ENCODE measurements at regions of chr20 and their contacts with region 1.

Region 1: DNA sequence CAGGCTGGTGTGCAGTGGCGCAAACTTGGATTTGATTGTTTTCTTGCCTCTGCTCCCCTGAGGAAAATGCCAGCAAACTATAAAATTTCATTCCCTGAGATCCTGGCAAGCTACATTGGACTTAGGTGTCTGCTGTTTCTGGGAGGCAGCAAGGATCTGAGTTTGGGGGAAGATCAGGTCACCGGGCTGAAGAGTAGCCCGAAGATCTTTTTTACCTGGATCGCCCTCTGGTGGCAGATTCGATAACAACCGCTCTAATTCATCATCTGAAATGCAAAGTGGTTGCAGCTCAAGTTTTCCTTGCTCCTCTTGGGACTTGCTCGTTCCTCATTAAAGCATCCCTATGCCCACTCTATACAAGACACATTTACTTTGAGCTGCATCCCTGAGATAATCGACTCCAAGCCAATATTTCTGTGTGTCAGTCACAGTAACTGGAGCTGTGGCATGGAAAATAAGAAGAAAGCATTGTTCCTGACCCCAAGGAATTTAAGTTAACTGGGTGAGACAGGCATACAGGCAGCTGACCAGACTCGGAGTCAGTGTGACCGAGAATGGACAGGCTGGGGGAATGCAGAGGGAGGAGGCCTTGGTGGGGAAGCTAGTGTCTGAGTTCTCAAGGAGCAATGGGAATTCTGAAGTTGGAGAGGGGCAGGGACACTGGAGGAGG is 131.8 kb upstream of the PROKR2 start:
- DNase-seq: peak; percentile 57
- ATAC-seq: peak; percentile 84
- H3K4me3 ChIP-seq: no peak overlapping the region
- H3K27ac ChIP-seq: no peak overlapping the region
- H3K4me1 ChIP-seq: no peaks in the 10 kb centered on the region
- H3K27me3 ChIP-seq: peaks cover 0 to 8% of the 10 kb centered on the region in 2 experiments; a peak in 1 of 5 replicates
- CTCF ChIP-seq: peak; percentile 86
- EP300 ChIP-seq: no peak
- POLR2A ChIP-seq: no peak
- RAD21 ChIP-seq: peak; percentile 66

Region 2: GRCh38 chr20:5205348-5206210 is 243.0 kb before region 1 on chr20:
- CTCF ChIA-PET with region 1: interaction called, 20 read pairs
- POLR2A ChIA-PET with region 1: no interaction called
- in situ Hi-C with region 1: loop called (anchors 5 kb)
- intact Hi-C with region 1: loop called (anchors 1 kb)
- DNase-seq: peak; percentile 80
- ATAC-seq: peak; percentile 84
- H3K4me3 ChIP-seq: no peak overlapping the region
- H3K27ac ChIP-seq: no peak overlapping the region
- H3K4me1 ChIP-seq: peaks cover 35% of the 10 kb centered on the region
- H3K27me3 ChIP-seq: no peaks in the 10 kb centered on the region
- CTCF ChIP-seq: peak; percentile 97
- EP300 ChIP-seq: no peak
- POLR2A ChIP-seq: no peak
- RAD21 ChIP-seq: peak; percentile 98

Region 3: GRCh38 chr20:5402903-5403531 is 45.6 kb before region 1 on chr20:
- CTCF ChIA-PET with region 1: interaction called, 10 read pairs
- POLR2A ChIA-PET with region 1: no interaction called
- in situ Hi-C with region 1: no loop called
- intact Hi-C with region 1: loop called (anchors 1 kb)
- DNase-seq: peak; percentile 62
- ATAC-seq: peak; percentile 100
- H3K4me3 ChIP-seq: no peak overlapping the region
- H3K27ac ChIP-seq: no peak overlapping the region
- H3K4me1 ChIP-seq: no peaks in the 10 kb centered on the region
- H3K27me3 ChIP-seq: no peaks in the 10 kb centered on the region
- CTCF ChIP-seq: peak; percentile 78
- EP300 ChIP-seq: no peak
- POLR2A ChIP-seq: no peak
- RAD21 ChIP-seq: peak; percentile 70

Measured in HepG2 (cell line).